Body of pancreas (tissue), 4 donors: ENCODE measurements at regions of chr1 and their contacts with region 1.

Region 1: DNA sequence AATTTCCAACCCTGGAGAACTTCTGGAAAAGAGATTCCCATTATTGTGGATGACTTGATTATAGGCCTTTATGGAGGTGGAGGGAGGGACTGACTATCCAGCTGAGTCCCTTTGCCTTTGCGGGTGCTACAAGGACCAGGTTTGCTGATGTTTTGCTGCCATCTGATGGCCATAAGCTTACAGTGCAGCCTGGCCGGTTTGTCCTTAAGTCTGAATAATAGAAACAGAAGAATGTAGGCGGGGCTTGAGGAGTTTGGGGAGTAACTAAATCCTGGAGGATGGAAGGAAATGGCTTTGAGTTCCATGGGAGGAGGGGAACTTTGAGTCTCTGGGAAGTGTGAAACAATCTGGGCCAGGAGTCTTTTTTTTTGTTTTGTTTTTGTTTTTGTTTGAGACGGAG is 55.7 kb upstream of the CD1D start:
- DNase-seq: peak; percentile 89 to 94 (median 92)
- ATAC-seq: peak; percentile 91
- H3K4me3 ChIP-seq: no peak overlapping the region
- H3K27ac ChIP-seq: peak overlapping the region in 1 of 4 donors; percentile 67
- H3K4me1 ChIP-seq: peaks cover 16% of the 10 kb centered on the region
- H3K27me3 ChIP-seq: no peaks in the 10 kb centered on the region
- CTCF ChIP-seq: peak; percentile 87 to 99 (median 97)
- POLR2A ChIP-seq: no peak

Region 2: GRCh38 chr1:157575744-157576143 is 549.3 kb before region 1 on chr1:
- intact Hi-C with region 1: loop called (anchors 10 kb)
- DNase-seq: no peak
- ATAC-seq: no peak
- H3K4me3 ChIP-seq: no peak overlapping the region
- H3K27ac ChIP-seq: no peak overlapping the region
- H3K4me1 ChIP-seq: no peaks in the 10 kb centered on the region
- H3K27me3 ChIP-seq: no peaks in the 10 kb centered on the region
- CTCF ChIP-seq: no peak
- POLR2A ChIP-seq: no peak

Region 3: DNA sequence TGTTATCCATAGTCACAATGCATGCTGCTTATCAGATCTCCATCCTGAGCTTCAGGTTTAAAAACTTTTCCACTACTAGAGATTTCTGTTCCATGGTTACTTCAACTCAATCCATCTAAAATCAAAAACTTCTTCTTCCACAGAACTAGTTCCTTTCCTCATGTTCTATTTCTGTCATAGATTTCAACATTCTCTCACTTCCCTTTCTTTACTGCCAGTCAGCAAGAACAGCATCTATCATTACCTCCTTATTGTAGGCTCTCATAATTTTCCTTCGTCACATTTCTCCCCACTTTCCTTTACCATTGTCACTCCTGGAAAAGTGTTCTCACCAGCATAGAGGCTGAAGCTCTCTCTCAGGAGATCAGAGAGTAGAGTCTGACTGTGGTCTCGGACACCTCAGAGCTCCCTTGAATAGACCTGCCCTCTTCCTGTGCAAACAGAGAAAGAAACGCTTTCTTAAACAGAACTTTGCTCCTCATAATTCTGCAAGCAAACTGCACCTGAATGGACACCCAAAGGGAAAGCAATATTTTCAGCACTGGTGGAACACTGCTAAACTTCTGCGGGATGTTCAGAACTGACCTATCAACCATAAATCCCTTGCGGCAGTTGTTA is 180.2 kb before region 1 on chr1:
- intact Hi-C with region 1: no loop called
- DNase-seq: no peak
- ATAC-seq: no peak
- H3K4me3 ChIP-seq: no peak overlapping the region
- H3K27ac ChIP-seq: no peak overlapping the region
- H3K4me1 ChIP-seq: no peaks in the 10 kb centered on the region
- H3K27me3 ChIP-seq: no peaks in the 10 kb centered on the region
- CTCF ChIP-seq: no peak
- POLR2A ChIP-seq: no peak

Region 4: GRCh38 chr1:157963713-157964112 is 161.3 kb before region 1 on chr1:
- intact Hi-C with region 1: loop called (anchors 5 kb)
- DNase-seq: peak; percentile 64 to 71 (median 68)
- ATAC-seq: peak; percentile 36
- H3K4me3 ChIP-seq: no peak overlapping the region
- H3K27ac ChIP-seq: no peak overlapping the region
- H3K4me1 ChIP-seq: peaks cover 43% of the 10 kb centered on the region
- H3K27me3 ChIP-seq: no peaks in the 10 kb centered on the region
- CTCF ChIP-seq: peak; percentile 81 to 98 (median 97)
- POLR2A ChIP-seq: peak in 1 of 3 donors; percentile 7

Region 5: GRCh38 chr1:158177700-158178450 is 52.9 kb after region 1 on chr1:
- intact Hi-C with region 1: no loop called
- DNase-seq: peak; percentile 83 to 93 (median 88)
- ATAC-seq: peak; percentile 92
- H3K4me3 ChIP-seq: peak overlapping the region in 1 of 2 donors; percentile 18
- H3K27ac ChIP-seq: no peak overlapping the region
- H3K4me1 ChIP-seq: peaks cover 22% of the 10 kb centered on the region
- H3K27me3 ChIP-seq: no peaks in the 10 kb centered on the region
- CTCF ChIP-seq: no peak
- POLR2A ChIP-seq: no peak